A673 (cell line): ENCODE measurements at regions of chr20 and their contacts with region 1.

Region 1: DNA sequence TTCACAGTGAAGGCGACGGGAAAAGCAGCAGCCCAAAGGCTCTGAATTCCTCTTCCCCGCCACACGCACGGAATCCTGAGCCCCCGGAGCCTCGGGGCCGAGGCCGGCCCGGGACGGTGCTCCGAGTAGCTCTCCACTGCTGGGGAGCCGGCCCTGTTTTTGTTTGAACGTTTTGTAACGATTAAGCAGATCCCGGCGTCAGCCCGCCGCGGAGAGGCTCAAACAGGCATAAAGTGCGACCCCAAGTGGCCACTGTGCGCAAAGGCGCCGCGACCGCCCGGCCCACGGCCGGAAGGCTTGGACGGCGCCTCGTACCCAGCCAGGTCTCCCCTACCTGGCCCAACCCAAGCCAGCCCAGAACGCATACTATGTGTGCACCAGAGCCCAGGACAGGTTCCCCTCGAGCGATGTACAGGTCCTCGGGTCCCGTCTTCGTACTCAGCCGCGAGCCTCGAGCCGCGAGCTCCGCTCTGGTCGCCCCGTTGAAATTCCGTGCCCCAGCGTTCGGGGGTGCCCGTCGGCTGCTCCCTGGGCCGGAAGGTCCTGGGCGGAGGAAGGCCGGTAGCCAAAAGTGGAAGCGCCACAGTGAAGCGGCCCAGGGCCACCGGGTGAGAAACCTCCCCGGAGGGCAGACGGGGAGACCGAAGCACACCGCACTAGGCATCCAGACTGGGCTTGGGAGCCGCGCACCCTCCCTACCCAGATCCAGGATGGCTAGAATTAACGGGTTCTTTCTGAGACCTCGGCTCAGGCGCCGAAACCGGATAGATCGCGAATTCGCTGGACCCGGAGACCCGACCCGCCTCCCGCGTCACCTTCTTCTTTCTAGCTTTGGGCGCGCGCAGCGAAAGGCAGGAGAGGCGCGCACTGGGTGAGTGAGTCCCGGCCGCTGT is 1.2 kb upstream of the MAFB start:
- DNase-seq: peak; percentile 92
- H3K4me3 ChIP-seq: peak overlapping the region; percentile 78
- H3K27ac ChIP-seq: peak overlapping the region; percentile 84
- H3K4me1 ChIP-seq: peaks cover 5% of the 10 kb centered on the region
- H3K27me3 ChIP-seq: peaks cover 5% of the 10 kb centered on the region
- CTCF ChIP-seq: peak; percentile 96

Region 2: DNA sequence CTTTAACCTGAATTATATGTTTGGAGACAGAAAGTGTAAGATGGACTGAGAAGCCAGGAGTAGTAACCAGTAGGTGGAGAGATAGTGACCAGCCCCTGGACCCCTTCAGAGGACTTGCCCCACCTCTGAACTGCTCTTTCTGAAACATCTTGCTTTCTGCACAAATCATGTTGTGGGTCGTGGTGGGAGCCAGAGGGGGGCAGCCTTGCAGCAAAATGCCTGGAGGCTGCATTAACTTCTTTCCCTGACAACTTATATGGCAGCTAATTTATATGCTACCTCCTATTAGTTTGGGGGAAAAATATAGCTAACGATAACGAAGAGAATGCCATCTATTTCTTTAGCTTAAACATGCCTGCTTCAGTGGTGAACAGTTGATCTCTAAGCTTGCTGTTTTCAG is 860.9 kb before region 1 on chr20:
- CTCF ChIA-PET with region 1: no interaction called
- POLR2A ChIA-PET with region 1: interaction called, 3 read pairs
- intact Hi-C with region 1: loop called (anchors 10 kb)
- DNase-seq: peak; percentile 62
- H3K4me3 ChIP-seq: no peak overlapping the region
- H3K27ac ChIP-seq: no peak overlapping the region
- H3K4me1 ChIP-seq: peaks cover 16% of the 10 kb centered on the region
- H3K27me3 ChIP-seq: no peaks in the 10 kb centered on the region
- CTCF ChIP-seq: peak; percentile 74

Region 3: GRCh38 chr20:40160097-40160550 is 530.1 kb before region 1 on chr20:
- CTCF ChIA-PET with region 1: interaction called, 7 read pairs
- POLR2A ChIA-PET with region 1: no interaction called
- intact Hi-C with region 1: loop called (anchors 5 kb)
- DNase-seq: peak; percentile 89
- H3K4me3 ChIP-seq: no peak overlapping the region
- H3K27ac ChIP-seq: no peak overlapping the region
- H3K4me1 ChIP-seq: no peaks in the 10 kb centered on the region
- H3K27me3 ChIP-seq: peaks cover 3% of the 10 kb centered on the region
- CTCF ChIP-seq: peak; percentile 86

Region 4: GRCh38 chr20:40265825-40266533 is 424.2 kb before region 1 on chr20:
- CTCF ChIA-PET with region 1: interaction called, 6 read pairs
- POLR2A ChIA-PET with region 1: no interaction called
- intact Hi-C with region 1: loop called (anchors 5 kb)
- DNase-seq: peak; percentile 76
- H3K4me3 ChIP-seq: no peak overlapping the region
- H3K27ac ChIP-seq: no peak overlapping the region
- H3K4me1 ChIP-seq: no peaks in the 10 kb centered on the region
- H3K27me3 ChIP-seq: no peaks in the 10 kb centered on the region
- CTCF ChIP-seq: peak; percentile 79

Region 5: GRCh38 chr20:40654876-40655275 is 35.3 kb before region 1 on chr20:
- CTCF ChIA-PET with region 1: no interaction called
- POLR2A ChIA-PET with region 1: interaction called, 3 read pairs
- intact Hi-C with region 1: loop called (anchors 5 kb)
- DNase-seq: peak; percentile 77
- H3K4me3 ChIP-seq: no peak overlapping the region
- H3K27ac ChIP-seq: no peak overlapping the region
- H3K4me1 ChIP-seq: peaks cover 33% of the 10 kb centered on the region
- H3K27me3 ChIP-seq: no peaks in the 10 kb centered on the region
- CTCF ChIP-seq: no peak